GM12878 (cell line): ENCODE measurements at regions of chr3 and their contacts with region 1.

Region 1: GRCh38 chr3:28218071-28218916 is 23.1 kb upstream of the CMC1 start:
- DNase-seq: peak; percentile 28
- ATAC-seq: peak; percentile 91
- H3K4me3 ChIP-seq: no peak overlapping the region
- H3K27ac ChIP-seq: no peak overlapping the region
- H3K4me1 ChIP-seq: no peaks in the 10 kb centered on the region
- H3K27me3 ChIP-seq: no peaks in the 10 kb centered on the region
- CTCF ChIP-seq: no peak
- EP300 ChIP-seq: peak; percentile 78 to 88; a peak in 3 of 4 replicates
- POLR2A ChIP-seq: no peak
- RAD21 ChIP-seq: no peak

Region 2: GRCh38 chr3:27963519-27963918 is 254.8 kb before region 1 on chr3:
- CTCF ChIA-PET with region 1: no interaction called
- POLR2A ChIA-PET with region 1: no interaction called
- RAD21 ChIA-PET with region 1: no interaction called
- SMC1A ChIA-PET with region 1: no interaction called
- in situ Hi-C with region 1: no loop called
- intact Hi-C with region 1: no loop called
- DNase-seq: no peak
- ATAC-seq: peak; percentile 23; the same call in 2 of the 3 replicates
- H3K4me3 ChIP-seq: no peak overlapping the region
- H3K27ac ChIP-seq: no peak overlapping the region
- H3K4me1 ChIP-seq: no peaks in the 10 kb centered on the region
- H3K27me3 ChIP-seq: no peaks in the 10 kb centered on the region
- CTCF ChIP-seq: no peak
- EP300 ChIP-seq: no peak
- POLR2A ChIP-seq: no peak
- RAD21 ChIP-seq: no peak

Region 3: GRCh38 chr3:28036599-28037575 is 181.4 kb before region 1 on chr3:
- CTCF ChIA-PET with region 1: interaction called, 3 read pairs
- POLR2A ChIA-PET with region 1: interaction called, 6 read pairs
- RAD21 ChIA-PET with region 1: interaction called, 6 read pairs
- SMC1A ChIA-PET with region 1: interaction called, 6 read pairs
- in situ Hi-C with region 1: no loop called
- intact Hi-C with region 1: loop called (anchors 1 kb)
- DNase-seq: no peak
- ATAC-seq: peak; percentile 83
- H3K4me3 ChIP-seq: no peak overlapping the region
- H3K27ac ChIP-seq: no peak overlapping the region
- H3K4me1 ChIP-seq: no peaks in the 10 kb centered on the region
- H3K27me3 ChIP-seq: no peaks in the 10 kb centered on the region
- CTCF ChIP-seq: no peak
- EP300 ChIP-seq: peak in 1 of 2 experiments; percentile 34; a peak in 1 of 4 replicates
- POLR2A ChIP-seq: no peak
- RAD21 ChIP-seq: no peak

Region 4: GRCh38 chr3:28122227-28122626 is 96.1 kb before region 1 on chr3:
- CTCF ChIA-PET with region 1: interaction called, 4 read pairs
- POLR2A ChIA-PET with region 1: interaction called, 4 read pairs
- RAD21 ChIA-PET with region 1: interaction called, 8 read pairs
- SMC1A ChIA-PET with region 1: interaction called, 11 read pairs
- in situ Hi-C with region 1: no loop called
- intact Hi-C with region 1: no loop called
- DNase-seq: no peak
- ATAC-seq: no peak
- H3K4me3 ChIP-seq: no peak overlapping the region
- H3K27ac ChIP-seq: no peak overlapping the region
- H3K4me1 ChIP-seq: no peaks in the 10 kb centered on the region
- H3K27me3 ChIP-seq: no peaks in the 10 kb centered on the region
- CTCF ChIP-seq: no peak
- EP300 ChIP-seq: no peak
- POLR2A ChIP-seq: no peak
- RAD21 ChIP-seq: no peak

Region 5: DNA sequence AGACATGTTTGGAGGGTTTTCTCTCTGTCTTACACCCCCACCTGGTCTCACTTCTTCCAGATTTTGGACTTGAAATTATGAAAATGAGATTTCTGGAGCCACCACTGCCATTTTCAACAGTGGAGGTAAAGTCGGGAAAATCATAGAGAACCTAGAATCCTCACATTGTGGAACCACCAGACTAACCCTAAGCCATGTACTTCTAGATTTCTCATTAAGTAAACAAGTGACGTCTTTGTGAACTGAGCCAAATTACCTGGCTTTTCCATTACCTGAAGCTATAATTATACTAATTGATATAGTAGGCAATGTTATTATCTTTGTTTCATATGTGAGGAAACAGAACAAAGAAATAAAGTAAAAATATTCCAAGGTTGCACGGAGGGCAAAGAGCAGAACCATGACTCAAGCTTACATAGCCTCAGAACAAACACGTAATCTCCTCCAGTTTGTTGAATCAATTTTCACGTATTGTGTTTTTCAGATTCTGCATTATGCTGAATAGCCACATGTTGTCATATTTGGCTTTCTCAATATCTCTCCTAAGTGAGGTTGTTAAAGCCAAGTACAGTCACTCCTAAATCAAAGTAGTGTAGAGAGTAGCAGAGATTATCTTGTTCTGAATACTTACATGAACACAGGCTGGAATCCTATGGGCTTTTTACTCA is 78.2 kb before region 1 on chr3:
- CTCF ChIA-PET with region 1: interaction called, 10 read pairs
- POLR2A ChIA-PET with region 1: interaction called, 4 read pairs
- RAD21 ChIA-PET with region 1: interaction called, 70 read pairs
- SMC1A ChIA-PET with region 1: interaction called, 62 read pairs
- in situ Hi-C with region 1: no loop called
- intact Hi-C with region 1: loop called (anchors 5 kb)
- DNase-seq: no peak
- ATAC-seq: peak; percentile 6
- H3K4me3 ChIP-seq: no peak overlapping the region
- H3K27ac ChIP-seq: no peak overlapping the region
- H3K4me1 ChIP-seq: no peaks in the 10 kb centered on the region
- H3K27me3 ChIP-seq: no peaks in the 10 kb centered on the region
- CTCF ChIP-seq: no peak
- EP300 ChIP-seq: no peak
- POLR2A ChIP-seq: no peak
- RAD21 ChIP-seq: no peak

Region 6: DNA sequence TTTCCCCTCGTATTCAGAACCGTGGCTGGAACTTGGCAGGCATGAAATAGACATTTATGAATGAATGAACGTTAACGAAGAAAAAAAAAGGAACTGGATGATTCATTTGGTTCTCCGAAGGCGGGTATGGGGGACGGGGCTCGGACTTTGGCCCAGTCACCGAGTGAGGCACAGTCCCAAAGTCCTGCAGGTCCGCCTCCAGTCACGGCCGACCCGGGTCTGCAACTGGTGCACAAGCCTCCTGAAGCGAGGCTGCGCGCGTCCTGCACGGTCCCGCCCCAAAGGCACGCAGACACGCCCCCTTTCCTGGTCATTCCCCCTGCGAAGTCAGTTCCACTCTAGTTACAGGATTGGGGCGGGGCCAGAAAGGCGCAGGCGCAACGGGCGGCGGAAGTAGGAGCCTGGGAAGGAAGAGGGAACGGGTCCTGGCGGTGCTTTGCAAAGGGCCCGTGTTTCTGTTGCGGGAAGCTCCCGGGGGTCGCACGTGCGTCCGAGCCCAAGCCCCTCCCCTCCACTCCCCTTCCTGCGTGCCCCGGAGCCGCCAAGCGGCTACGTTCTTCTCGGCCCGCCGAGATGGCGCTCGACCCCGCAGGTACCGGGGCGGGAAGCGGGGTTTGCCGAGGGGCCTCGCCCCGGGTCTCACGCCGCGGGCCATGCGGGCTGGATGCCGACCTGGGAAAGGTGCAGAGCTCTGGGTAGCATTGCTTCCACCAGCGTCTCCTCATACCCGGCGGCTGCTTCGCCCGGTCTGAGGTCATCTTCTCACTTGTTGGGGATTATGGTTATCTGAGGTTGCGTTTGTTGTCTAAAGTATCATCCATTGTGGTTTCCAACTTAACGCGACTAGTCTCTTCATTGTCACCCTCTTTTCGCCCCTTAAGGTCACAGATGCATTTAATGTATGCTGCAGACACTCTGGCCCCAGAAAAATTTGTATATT is 23.2 kb after region 1 on chr3 and contains the start of gene CMC1:
- CTCF ChIA-PET with region 1: interaction called, 4 read pairs
- POLR2A ChIA-PET with region 1: interaction called, 11 read pairs
- RAD21 ChIA-PET with region 1: interaction called, 11 read pairs
- SMC1A ChIA-PET with region 1: interaction called, 20 read pairs
- in situ Hi-C with region 1: no loop called
- intact Hi-C with region 1: no loop called
- DNase-seq: peak; percentile 85
- ATAC-seq: peak; percentile 95
- H3K4me3 ChIP-seq: peak within 1 kb of the TSS; percentile 81
- H3K27ac ChIP-seq: peak within 1 kb of the TSS; percentile 79
- H3K4me1 ChIP-seq: no peaks in the 10 kb centered on the region
- H3K27me3 ChIP-seq: no peaks in the 10 kb centered on the region
- CTCF ChIP-seq: no peak
- EP300 ChIP-seq: peak; percentile 24 to 28; a peak in 2 of 4 replicates
- POLR2A ChIP-seq: peak; percentile 84
- RAD21 ChIP-seq: no peak
- polyA plus RNA-seq, gene CMC1: 26.9 to 41.2 TPM

Region 7: DNA sequence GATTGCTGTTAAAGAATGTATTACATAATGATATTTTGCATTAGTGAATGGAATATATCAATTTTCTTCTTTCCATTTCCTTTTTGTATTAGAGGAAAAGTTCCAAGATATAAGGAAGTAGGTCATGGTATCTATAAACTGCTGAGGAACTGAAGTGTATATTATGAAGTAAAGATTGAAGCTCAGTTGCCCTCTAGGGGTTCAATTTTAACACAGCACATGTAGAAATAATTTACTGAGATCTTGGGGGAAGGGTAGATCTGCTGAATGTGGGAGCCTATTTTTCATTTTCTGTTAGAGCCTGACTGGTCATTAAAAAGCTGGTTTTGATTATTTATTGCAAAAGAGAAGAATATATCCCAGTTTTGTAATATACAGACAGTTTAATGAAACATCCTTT is 68.3 kb after region 1 on chr3:
- CTCF ChIA-PET with region 1: interaction called, 3 read pairs
- POLR2A ChIA-PET with region 1: no interaction called
- RAD21 ChIA-PET with region 1: interaction called, 21 read pairs
- SMC1A ChIA-PET with region 1: interaction called, 8 read pairs
- in situ Hi-C with region 1: no loop called
- intact Hi-C with region 1: no loop called
- DNase-seq: peak; percentile 8
- ATAC-seq: peak; percentile 96
- H3K4me3 ChIP-seq: no peak overlapping the region
- H3K27ac ChIP-seq: no peak overlapping the region
- H3K4me1 ChIP-seq: no peaks in the 10 kb centered on the region
- H3K27me3 ChIP-seq: no peaks in the 10 kb centered on the region
- CTCF ChIP-seq: peak; percentile 48 to 63 (median 50); a peak in 5 of 6 replicates
- EP300 ChIP-seq: no peak
- POLR2A ChIP-seq: no peak
- RAD21 ChIP-seq: peak; percentile 73

Region 8: GRCh38 chr3:28504976-28505375 is 286.7 kb after region 1 on chr3:
- CTCF ChIA-PET with region 1: no interaction called
- POLR2A ChIA-PET with region 1: no interaction called
- RAD21 ChIA-PET with region 1: no interaction called
- SMC1A ChIA-PET with region 1: no interaction called
- in situ Hi-C with region 1: no loop called
- intact Hi-C with region 1: no loop called
- DNase-seq: no peak
- ATAC-seq: no peak
- H3K4me3 ChIP-seq: no peak overlapping the region
- H3K27ac ChIP-seq: no peak overlapping the region
- H3K4me1 ChIP-seq: no peaks in the 10 kb centered on the region
- H3K27me3 ChIP-seq: no peaks in the 10 kb centered on the region
- CTCF ChIP-seq: no peak
- EP300 ChIP-seq: no peak
- POLR2A ChIP-seq: no peak
- RAD21 ChIP-seq: no peak